Activated T-helper 2 cell treated with anti-CD3 and anti-CD28 coated beads, Interferon-gamma antibody, Interleukin-2, Interleukin-4, amounts not matched to agents 10 μg/mL and 5 μg/mL and 100 μg/mL, durations not matched to agents 14 hours and 24 hours and 36 hours (primary cell): ENCODE measurements at regions of chr18 and their contacts with region 1.

Region 1: GRCh38 chr18:74081966-74082741 is 65.5 kb downstream of the FBXO15 start:
- DNase-seq: peak; percentile 63
- H3K4me3 Mint-ChIP-seq: peak overlapping the region; percentile 79
- H3K27ac Mint-ChIP-seq: peak overlapping the region; percentile 99
- H3K4me1 Mint-ChIP-seq: peaks cover 17% of the 10 kb centered on the region
- H3K27me3 Mint-ChIP-seq: peaks cover 7% of the 10 kb centered on the region

Region 2: GRCh38 chr18:73987247-73987980 is 94.7 kb before region 1 on chr18:
- intact Hi-C with region 1: no loop called
- DNase-seq: no peak
- H3K4me3 Mint-ChIP-seq: no peak overlapping the region
- H3K27ac Mint-ChIP-seq: no peak overlapping the region
- H3K4me1 Mint-ChIP-seq: no peaks in the 10 kb centered on the region
- H3K27me3 Mint-ChIP-seq: no peaks in the 10 kb centered on the region

Region 3: DNA sequence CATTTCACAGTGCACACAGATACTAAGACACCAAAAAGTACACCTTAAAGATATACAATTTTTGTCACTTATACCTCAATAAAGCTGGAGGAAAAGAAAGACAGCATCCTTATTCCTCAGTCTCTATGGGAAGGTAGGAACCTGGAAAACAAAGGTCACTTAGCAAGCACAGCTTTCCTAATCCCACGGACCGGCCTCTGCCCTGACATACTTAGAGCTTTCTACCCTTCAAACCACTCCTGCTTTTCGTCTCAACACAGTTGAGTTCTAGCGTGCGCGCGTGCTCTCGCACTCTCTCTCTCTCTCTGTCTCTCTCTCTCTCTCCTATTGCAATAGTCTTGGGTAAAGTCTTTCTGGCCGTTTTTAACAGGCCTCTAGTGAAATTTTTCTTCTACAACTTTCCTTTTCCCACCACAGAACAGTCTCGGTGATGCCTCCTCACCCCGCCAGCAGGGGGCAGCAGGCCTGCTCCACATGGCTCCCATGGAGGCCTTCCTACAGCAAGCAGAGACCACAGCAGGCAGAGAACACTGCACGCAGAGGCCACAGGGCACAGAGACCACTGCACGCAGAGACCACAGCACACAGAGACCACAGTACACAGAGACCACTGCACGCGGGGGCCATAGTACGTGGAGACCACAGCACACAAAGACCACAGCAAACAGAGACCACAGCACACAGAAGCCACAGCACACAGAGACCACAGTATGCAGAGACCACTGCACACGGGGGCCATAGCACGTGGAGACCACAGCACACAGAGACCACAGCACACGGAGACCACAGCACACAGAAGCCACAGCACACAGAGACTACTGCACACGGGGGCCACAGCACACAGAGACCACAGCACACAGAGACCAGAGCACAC is 41.5 kb before region 1 on chr18:
- intact Hi-C with region 1: loop called (anchors 1 kb)
- DNase-seq: peak; percentile 56
- H3K4me3 Mint-ChIP-seq: no peak overlapping the region
- H3K27ac Mint-ChIP-seq: no peak overlapping the region
- H3K4me1 Mint-ChIP-seq: no peaks in the 10 kb centered on the region
- H3K27me3 Mint-ChIP-seq: no peaks in the 10 kb centered on the region

Region 4: GRCh38 chr18:74063023-74063422 is 19.1 kb before region 1 on chr18:
- intact Hi-C with region 1: loop called (anchors 1 kb)
- DNase-seq: peak; percentile 25
- H3K4me3 Mint-ChIP-seq: no peak overlapping the region
- H3K27ac Mint-ChIP-seq: peak overlapping the region; percentile 75
- H3K4me1 Mint-ChIP-seq: peaks cover 51% of the 10 kb centered on the region
- H3K27me3 Mint-ChIP-seq: no peaks in the 10 kb centered on the region

Region 5: GRCh38 chr18:74116633-74117554 is 34.7 kb after region 1 on chr18:
- intact Hi-C with region 1: loop called (anchors 1 kb)
- DNase-seq: no peak
- H3K4me3 Mint-ChIP-seq: no peak overlapping the region
- H3K27ac Mint-ChIP-seq: no peak overlapping the region
- H3K4me1 Mint-ChIP-seq: peaks cover 20% of the 10 kb centered on the region
- H3K27me3 Mint-ChIP-seq: peaks cover 5% of the 10 kb centered on the region

Region 6: DNA sequence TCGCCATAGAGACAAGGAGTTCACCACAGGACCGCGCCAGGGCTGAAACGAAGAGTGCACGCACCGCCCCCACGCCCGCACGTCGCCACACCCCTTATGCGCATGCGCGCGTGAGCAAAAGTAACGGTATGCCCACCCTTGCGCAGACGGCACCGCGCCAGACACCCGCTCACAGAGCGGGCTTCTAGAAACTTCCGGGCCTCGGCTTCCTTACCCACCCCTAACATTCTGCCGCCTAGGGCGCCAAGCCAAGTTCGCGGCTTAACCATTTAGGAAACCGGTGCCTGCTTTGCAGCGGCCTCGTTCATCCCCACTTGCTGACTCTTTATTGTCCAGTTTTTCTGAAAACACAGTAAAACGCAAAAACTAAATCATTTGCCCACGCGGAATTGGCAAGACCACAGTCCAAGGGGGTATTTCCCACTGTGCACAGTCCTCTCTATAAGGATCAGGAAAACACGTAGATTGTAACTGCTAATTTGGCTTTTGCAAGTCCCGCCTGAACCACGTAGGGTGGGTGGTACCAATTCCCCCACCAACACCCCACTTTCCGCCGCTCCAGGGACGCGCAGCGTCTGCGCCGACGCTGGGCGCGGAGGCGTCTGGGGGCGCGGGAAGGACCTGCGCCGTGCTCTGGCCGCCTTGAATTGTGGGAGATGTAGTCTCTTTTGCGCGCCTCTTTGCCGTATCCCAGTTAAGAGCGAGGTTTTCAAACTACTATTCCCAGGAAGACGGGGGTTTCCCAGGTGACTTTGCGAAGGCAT is 65.8 kb after region 1 on chr18 and contains the starts of genes FBXO15 and TIMM21:
- intact Hi-C with region 1: loop called (anchors 1 kb)
- DNase-seq: peak; percentile 95
- H3K4me3 Mint-ChIP-seq: peak within 1 kb of the TSS; percentile 99
- H3K27ac Mint-ChIP-seq: peak within 1 kb of the TSS; percentile 98
- H3K4me1 Mint-ChIP-seq: peaks cover 45% of the 10 kb centered on the region
- H3K27me3 Mint-ChIP-seq: peaks cover 4% of the 10 kb centered on the region
- total RNA-seq, gene FBXO15: 0.91 and 1.1 TPM in 2 replicates
- total RNA-seq, gene TIMM21: 48.3 and 50.0 TPM in 2 replicates

Region 7: GRCh38 chr18:74196220-74197119 is 114.3 kb after region 1 on chr18:
- intact Hi-C with region 1: loop called (anchors 5 kb)
- DNase-seq: peak; percentile 30
- H3K4me3 Mint-ChIP-seq: peak overlapping the region; percentile 73
- H3K27ac Mint-ChIP-seq: no peak overlapping the region
- H3K4me1 Mint-ChIP-seq: peaks cover 6% of the 10 kb centered on the region
- H3K27me3 Mint-ChIP-seq: peaks cover 7% of the 10 kb centered on the region

Region 8: GRCh38 chr18:74342416-74343043 is 260.4 kb after region 1 on chr18:
- intact Hi-C with region 1: loop called (anchors 5 kb)
- DNase-seq: no peak
- H3K4me3 Mint-ChIP-seq: no peak overlapping the region
- H3K27ac Mint-ChIP-seq: no peak overlapping the region
- H3K4me1 Mint-ChIP-seq: peaks cover 2% of the 10 kb centered on the region
- H3K27me3 Mint-ChIP-seq: peaks cover 28% of the 10 kb centered on the region